Gastrocnemius medialis (tissue), 4 donors: ENCODE measurements at regions of chr3 and their contacts with region 1.

Region 1: DNA sequence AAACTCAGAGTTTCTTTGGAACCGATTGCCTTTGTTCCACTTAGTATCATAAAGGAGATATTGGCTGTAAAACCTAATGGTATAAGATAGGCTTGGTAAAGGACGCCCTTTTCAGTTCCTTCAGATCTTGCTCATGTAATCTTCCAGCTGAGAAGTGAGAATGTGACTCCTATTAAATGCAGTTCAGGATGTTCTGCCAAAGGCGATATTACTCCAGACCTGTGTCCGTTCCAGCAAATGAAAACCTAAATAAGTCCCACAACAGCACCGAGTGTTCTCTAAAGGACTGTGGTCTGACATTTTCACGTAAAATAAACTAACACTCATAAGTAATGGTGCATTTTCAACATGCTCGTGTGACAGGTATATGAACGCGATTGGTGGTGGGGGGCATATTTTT is 276.2 kb downstream of the FEZF2 start:
- DNase-seq: peak; percentile 76 to 80
- ATAC-seq: peak; percentile 87 to 88
- H3K4me3 ChIP-seq: peak overlapping the region in 3 of 4 donors; percentile 21 to 29 (median 27)
- H3K27ac ChIP-seq: peak overlapping the region; percentile 87 to 95 (median 90)
- H3K4me1 ChIP-seq: peaks cover 52 to 68% of the 10 kb centered on the region in 2 donors
- H3K27me3 ChIP-seq: no peaks in the 10 kb centered on the region
- CTCF ChIP-seq: no peak
- POLR2A ChIP-seq: peak in 1 of 2 donors; percentile 39

Region 2: GRCh38 chr3:62039586-62039985 is 57.5 kb before region 1 on chr3:
- in situ Hi-C with region 1: no loop called
- intact Hi-C with region 1: loop called (anchors 2 kb)
- DNase-seq: no peak
- ATAC-seq: no peak
- H3K4me3 ChIP-seq: no peak overlapping the region
- H3K27ac ChIP-seq: peak overlapping the region; percentile 71 to 76 (median 74)
- H3K4me1 ChIP-seq: peaks cover 17 to 24% of the 10 kb centered on the region in 2 donors
- H3K27me3 ChIP-seq: no peaks in the 10 kb centered on the region
- CTCF ChIP-seq: no peak
- POLR2A ChIP-seq: no peak

Region 3: GRCh38 chr3:62128051-62128450 is 30.9 kb after region 1 on chr3:
- in situ Hi-C with region 1: no loop called
- intact Hi-C with region 1: loop called (anchors 2 kb)
- DNase-seq: peak; percentile 61 to 84
- ATAC-seq: peak; percentile 95 to 98
- H3K4me3 ChIP-seq: no peak overlapping the region
- H3K27ac ChIP-seq: peak overlapping the region; percentile 39 to 69 (median 65)
- H3K4me1 ChIP-seq: peaks cover 21 to 40% of the 10 kb centered on the region in 2 donors
- H3K27me3 ChIP-seq: no peaks in the 10 kb centered on the region
- CTCF ChIP-seq: no peak
- POLR2A ChIP-seq: no peak

Region 4: GRCh38 chr3:62159709-62160092 is 62.6 kb after region 1 on chr3:
- in situ Hi-C with region 1: loop called in 1 of 4 experiments (anchors 10 kb)
- intact Hi-C with region 1: loop called (anchors 2 kb)
- DNase-seq: peak; percentile 92
- ATAC-seq: peak; percentile 92
- H3K4me3 ChIP-seq: peak overlapping the region; percentile 2 to 40 (median 6)
- H3K27ac ChIP-seq: peak overlapping the region; percentile 89 to 93 (median 91)
- H3K4me1 ChIP-seq: peaks cover 49 to 65% of the 10 kb centered on the region in 2 donors
- H3K27me3 ChIP-seq: no peaks in the 10 kb centered on the region
- CTCF ChIP-seq: no peak
- POLR2A ChIP-seq: peak; percentile 23 to 64

Region 5: DNA sequence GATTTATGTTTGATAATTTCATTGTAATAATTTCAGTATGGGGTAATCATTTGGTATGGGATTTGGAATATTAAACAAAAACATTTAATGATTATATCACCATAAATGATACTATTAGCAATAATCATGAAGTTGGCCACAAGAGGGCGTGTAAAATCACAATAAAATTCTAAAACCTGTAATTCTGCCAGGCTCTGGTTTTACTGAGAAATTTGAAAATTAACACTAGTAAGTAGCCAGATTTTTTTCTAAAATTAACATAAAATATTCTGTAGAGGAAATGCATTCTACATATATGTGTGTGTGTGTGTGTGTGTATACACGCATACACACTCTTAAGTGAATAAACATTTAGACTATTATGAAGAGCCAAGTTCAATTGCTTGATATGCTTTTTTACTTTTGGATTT is 235.7 kb after region 1 on chr3:
- in situ Hi-C with region 1: no loop called
- intact Hi-C with region 1: no loop called
- DNase-seq: no peak
- ATAC-seq: no peak
- H3K4me3 ChIP-seq: no peak overlapping the region
- H3K27ac ChIP-seq: no peak overlapping the region
- H3K4me1 ChIP-seq: no peaks in the 10 kb centered on the region
- H3K27me3 ChIP-seq: no peaks in the 10 kb centered on the region
- CTCF ChIP-seq: peak in 3 of 5 experiments; percentile 12 to 52 (median 36)
- POLR2A ChIP-seq: no peak